Pancreas (tissue), 10 donors: ENCODE measurements at regions of chr4 and their contacts with region 1.

Region 1: GRCh38 chr4:70640192-70640591 is 11.6 kb downstream of the ENAM start:
- DNase-seq: no peak
- ATAC-seq: no peak
- H3K4me3 ChIP-seq: no peak overlapping the region
- H3K27ac ChIP-seq: no peak overlapping the region
- H3K4me1 ChIP-seq: peaks cover 0 to 8% (median 7%) of the 10 kb centered on the region in 3 donors
- H3K27me3 ChIP-seq: no peaks in the 10 kb centered on the region
- CTCF ChIP-seq: no peak

Region 2: DNA sequence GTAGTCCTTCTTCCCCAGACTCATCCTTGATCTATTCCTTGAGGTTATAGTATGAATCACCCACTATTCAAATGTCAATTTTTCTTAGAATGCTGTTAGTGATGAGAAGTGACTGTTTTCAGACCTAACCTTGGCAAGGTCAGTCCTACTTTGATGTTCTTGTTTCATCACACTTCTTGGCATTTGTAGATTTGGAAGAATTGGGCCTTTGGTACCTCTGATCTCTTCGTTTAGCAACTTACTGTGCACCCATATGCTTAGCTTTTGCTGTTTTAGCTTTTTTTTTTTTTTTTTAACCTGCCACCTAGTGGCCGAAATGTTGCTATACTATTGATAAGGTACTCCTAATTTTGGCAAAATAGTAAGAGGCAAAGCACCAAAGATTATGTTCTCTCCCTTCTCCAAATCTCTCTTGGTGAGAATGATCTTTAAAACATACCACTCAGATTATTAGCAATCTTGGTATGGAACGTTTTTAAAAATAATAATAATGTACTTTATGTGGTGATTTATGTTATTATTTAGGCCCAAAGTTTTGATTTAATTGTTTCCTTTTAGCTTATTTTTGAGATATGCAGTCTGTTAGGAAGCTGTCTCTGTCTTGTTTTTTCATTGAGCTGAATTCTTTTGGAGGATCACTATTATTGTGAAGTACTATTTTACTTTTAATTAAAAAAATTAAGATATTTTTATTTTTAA is 369.8 kb after region 1 on chr4:
- intact Hi-C with region 1: loop called in 1 of 3 experiments (anchors 10 kb)
- DNase-seq: no peak
- ATAC-seq: peak in 3 of 4 donors; percentile 66 to 80 (median 77)
- H3K4me3 ChIP-seq: no peak overlapping the region
- H3K27ac ChIP-seq: no peak overlapping the region
- H3K4me1 ChIP-seq: no peaks in the 10 kb centered on the region
- H3K27me3 ChIP-seq: no peaks in the 10 kb centered on the region
- CTCF ChIP-seq: peak; percentile 25 to 65 (median 46)